ENCODE measurements at regions of chr22 and their contacts with region 1.

Region 1: GRCh38 chr22:19970479-19971275 is 29.1 kb upstream of the TXNRD2 start:
- DNase-seq: no peak
- H3K4me3 ChIP-seq: no peak overlapping the region
- H3K27ac ChIP-seq: no peak overlapping the region
- H3K4me1 ChIP-seq: peaks cover 11% of the 10 kb centered on the region
- H3K27me3 ChIP-seq: no peaks in the 10 kb centered on the region
- CTCF ChIP-seq: peak; percentile 58 to 89

Region 2: GRCh38 chr22:19877626-19878339 is 92.9 kb before region 1 on chr22:
- CTCF ChIA-PET with region 1: no interaction called
- dilution Hi-C with region 1: no loop called
- in situ Hi-C with region 1: no loop called
- intact Hi-C with region 1: no loop called
- DNase-seq: no peak
- H3K4me3 ChIP-seq: no peak overlapping the region
- H3K27ac ChIP-seq: no peak overlapping the region
- H3K4me1 ChIP-seq: peaks cover 62% of the 10 kb centered on the region
- H3K27me3 ChIP-seq: no peaks in the 10 kb centered on the region
- CTCF ChIP-seq: no peak

Region 3: GRCh38 chr22:19941365-19942082 is 29.2 kb before region 1 on chr22 and contains the starts of genes COMT and TXNRD2:
- CTCF ChIA-PET with region 1: no interaction called
- dilution Hi-C with region 1: no loop called
- in situ Hi-C with region 1: no loop called
- intact Hi-C with region 1: no loop called
- DNase-seq: peak; percentile 54
- H3K4me3 ChIP-seq: peak within 1 kb of the TSS; percentile 64 to 71 (median 70)
- H3K27ac ChIP-seq: peak within 1 kb of the TSS; percentile 80
- H3K4me1 ChIP-seq: peaks cover 28% of the 10 kb centered on the region
- H3K27me3 ChIP-seq: no peaks in the 10 kb centered on the region
- CTCF ChIP-seq: no peak
- total RNA-seq, gene COMT: 180 to 193 TPM
- total RNA-seq, gene TXNRD2: 13.2 to 22.1 TPM

Region 4: GRCh38 chr22:20013382-20013871 is 42.8 kb after region 1 on chr22:
- CTCF ChIA-PET with region 1: no interaction called
- dilution Hi-C with region 1: no loop called
- in situ Hi-C with region 1: loop called in 1 of 2 experiments (anchors 5 kb)
- intact Hi-C with region 1: loop called (anchors 1 kb)
- DNase-seq: no peak
- H3K4me3 ChIP-seq: no peak overlapping the region
- H3K27ac ChIP-seq: no peak overlapping the region
- H3K4me1 ChIP-seq: peaks cover 33% of the 10 kb centered on the region
- H3K27me3 ChIP-seq: no peaks in the 10 kb centered on the region
- CTCF ChIP-seq: peak; percentile 57 to 82

Region 5: DNA sequence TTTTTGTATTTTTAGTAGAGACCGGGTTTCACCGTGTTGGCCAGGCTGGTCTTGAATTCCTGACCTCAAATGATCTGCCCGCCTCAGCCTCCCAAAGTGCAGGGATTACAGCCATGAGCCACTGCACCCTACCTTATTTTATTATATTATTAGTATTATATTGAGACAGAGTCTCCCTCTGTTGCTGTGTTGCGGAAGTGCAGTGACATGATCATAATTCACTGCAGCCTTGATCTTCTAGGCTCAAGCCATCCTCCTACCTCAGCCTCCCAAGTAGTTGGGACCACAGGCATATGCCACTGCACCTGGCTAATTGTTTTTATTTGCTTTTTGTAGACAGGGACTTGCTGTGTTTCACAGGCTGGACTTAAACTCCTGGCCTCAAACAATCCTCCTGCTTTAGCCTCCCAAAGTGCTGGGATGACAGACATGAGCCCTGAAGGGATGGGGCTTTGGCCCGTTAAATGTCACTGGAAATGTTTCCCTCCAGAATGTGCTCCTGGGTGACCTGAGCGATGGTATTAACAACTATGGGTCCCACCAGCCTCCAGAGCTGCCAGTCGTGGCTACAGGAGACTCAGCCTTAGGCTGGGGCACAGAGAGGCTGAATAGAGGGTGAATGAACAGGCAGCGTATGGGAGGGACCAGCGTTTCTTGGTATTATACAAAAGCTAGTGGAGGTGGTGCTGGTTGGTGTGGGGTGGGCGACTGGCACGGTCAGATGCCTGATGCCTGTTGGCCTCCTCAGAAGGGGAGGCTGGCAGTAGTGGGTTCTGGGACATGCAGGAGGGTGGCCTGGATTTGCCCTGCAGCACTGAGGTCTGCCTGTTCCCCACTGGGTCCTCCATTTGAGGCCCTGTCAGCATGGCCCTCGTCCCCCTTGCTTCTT is 57.5 kb after region 1 on chr22:
- CTCF ChIA-PET with region 1: no interaction called
- dilution Hi-C with region 1: no loop called
- in situ Hi-C with region 1: loop called in 1 of 2 experiments (anchors 5 kb)
- intact Hi-C with region 1: loop called (anchors 1 kb)
- DNase-seq: no peak
- H3K4me3 ChIP-seq: no peak overlapping the region
- H3K27ac ChIP-seq: no peak overlapping the region
- H3K4me1 ChIP-seq: peaks cover 6% of the 10 kb centered on the region
- H3K27me3 ChIP-seq: no peaks in the 10 kb centered on the region
- CTCF ChIP-seq: peak; percentile 26 to 49

Region 6: GRCh38 chr22:20066617-20067383 is 96.1 kb after region 1 on chr22:
- CTCF ChIA-PET with region 1: no interaction called
- dilution Hi-C with region 1: no loop called
- in situ Hi-C with region 1: no loop called
- intact Hi-C with region 1: no loop called
- DNase-seq: no peak
- H3K4me3 ChIP-seq: no peak overlapping the region
- H3K27ac ChIP-seq: no peak overlapping the region
- H3K4me1 ChIP-seq: peaks cover 24% of the 10 kb centered on the region
- H3K27me3 ChIP-seq: no peaks in the 10 kb centered on the region
- CTCF ChIP-seq: no peak

Region 7: DNA sequence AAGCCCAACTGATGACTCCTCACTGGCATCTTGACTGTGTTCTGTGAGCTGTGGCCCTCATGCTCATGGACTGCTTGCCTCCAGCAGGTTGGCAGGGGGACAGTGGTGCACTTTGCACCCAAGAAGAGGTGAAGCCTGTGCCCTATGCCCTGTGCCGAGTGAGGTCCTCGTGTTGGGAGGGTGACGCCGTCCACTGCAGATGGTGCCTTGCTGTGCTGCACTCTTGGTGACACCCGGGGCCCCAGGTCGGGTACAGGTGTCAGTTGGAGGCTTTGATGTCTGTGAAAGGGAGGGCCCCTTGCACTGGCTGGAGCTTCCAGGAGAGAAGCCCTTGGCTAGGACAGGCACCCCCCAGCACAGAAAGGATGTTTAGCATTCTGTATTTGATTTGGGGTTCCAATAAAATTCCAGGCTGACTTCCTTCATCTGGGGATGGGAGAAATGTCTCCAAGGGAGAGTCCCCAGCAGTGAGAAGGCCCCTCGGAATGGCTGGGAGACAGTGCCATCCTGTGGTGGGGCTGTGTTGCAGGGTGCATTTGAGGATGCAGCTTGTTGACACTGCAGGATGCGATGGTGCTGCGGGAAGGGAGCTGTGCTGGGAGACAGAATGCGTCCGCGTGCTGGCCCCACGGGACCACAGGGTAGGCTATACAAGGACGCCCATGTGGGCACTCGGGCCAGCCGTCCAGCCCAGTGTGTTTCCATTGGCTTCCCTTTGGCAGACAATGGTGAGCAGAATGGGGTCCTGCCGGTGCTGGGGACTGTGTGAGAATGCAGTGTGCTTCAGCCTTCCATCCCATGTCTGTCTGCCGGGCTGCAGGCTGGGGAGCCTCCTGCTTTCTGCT is 158.4 kb after region 1 on chr22:
- CTCF ChIA-PET with region 1: interaction called, 3 read pairs
- dilution Hi-C with region 1: no loop called
- in situ Hi-C with region 1: no loop called
- intact Hi-C with region 1: loop called (anchors 1 kb)
- DNase-seq: no peak
- H3K4me3 ChIP-seq: no peak overlapping the region
- H3K27ac ChIP-seq: no peak overlapping the region
- H3K4me1 ChIP-seq: peaks cover 11% of the 10 kb centered on the region
- H3K27me3 ChIP-seq: no peaks in the 10 kb centered on the region
- CTCF ChIP-seq: peak; percentile 31 to 44